ENCODE measurements at regions of chr17 and their contacts with region 1.

Region 1: GRCh38 chr17:10875979-10876555 is 38.2 kb upstream of the PIRT start:
- DNase-seq: no peak
- ATAC-seq: no peak
- H3K4me3 Mint-ChIP-seq: no peak overlapping the region
- H3K27ac Mint-ChIP-seq: no peak overlapping the region
- H3K4me1 Mint-ChIP-seq: no peaks in the 10 kb centered on the region
- H3K27me3 Mint-ChIP-seq: peaks cover 20% of the 10 kb centered on the region
- CTCF ChIP-seq: no peak

Region 2: DNA sequence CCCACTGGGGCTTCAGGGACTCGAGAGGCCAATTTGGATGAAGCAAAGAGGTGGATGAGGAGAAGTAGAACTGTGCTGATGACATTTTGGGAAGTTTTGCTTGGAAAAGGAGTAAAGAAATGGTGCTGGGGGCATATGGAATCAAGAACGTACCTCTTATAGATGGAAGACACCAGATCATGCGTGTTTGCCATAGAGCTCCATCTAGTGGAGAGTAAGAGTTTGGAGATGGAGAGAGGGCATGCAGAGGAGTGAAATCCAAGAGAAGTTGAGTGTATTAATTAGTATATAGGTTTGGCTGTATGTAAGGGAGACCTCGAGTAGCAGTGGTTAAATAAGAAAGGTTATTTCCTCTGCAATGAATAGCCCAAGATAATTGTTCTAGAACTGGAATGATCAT is 420.9 kb after region 1 on chr17:
- CTCF ChIA-PET with region 1: no interaction called
- POLR2A ChIA-PET with region 1: no interaction called
- intact Hi-C with region 1: loop called (anchors 5 kb)
- DNase-seq: no peak
- ATAC-seq: no peak
- H3K4me3 Mint-ChIP-seq: no peak overlapping the region
- H3K27ac Mint-ChIP-seq: no peak overlapping the region
- H3K4me1 Mint-ChIP-seq: no peaks in the 10 kb centered on the region
- H3K27me3 Mint-ChIP-seq: no peaks in the 10 kb centered on the region
- CTCF ChIP-seq: no peak

Region 3: DNA sequence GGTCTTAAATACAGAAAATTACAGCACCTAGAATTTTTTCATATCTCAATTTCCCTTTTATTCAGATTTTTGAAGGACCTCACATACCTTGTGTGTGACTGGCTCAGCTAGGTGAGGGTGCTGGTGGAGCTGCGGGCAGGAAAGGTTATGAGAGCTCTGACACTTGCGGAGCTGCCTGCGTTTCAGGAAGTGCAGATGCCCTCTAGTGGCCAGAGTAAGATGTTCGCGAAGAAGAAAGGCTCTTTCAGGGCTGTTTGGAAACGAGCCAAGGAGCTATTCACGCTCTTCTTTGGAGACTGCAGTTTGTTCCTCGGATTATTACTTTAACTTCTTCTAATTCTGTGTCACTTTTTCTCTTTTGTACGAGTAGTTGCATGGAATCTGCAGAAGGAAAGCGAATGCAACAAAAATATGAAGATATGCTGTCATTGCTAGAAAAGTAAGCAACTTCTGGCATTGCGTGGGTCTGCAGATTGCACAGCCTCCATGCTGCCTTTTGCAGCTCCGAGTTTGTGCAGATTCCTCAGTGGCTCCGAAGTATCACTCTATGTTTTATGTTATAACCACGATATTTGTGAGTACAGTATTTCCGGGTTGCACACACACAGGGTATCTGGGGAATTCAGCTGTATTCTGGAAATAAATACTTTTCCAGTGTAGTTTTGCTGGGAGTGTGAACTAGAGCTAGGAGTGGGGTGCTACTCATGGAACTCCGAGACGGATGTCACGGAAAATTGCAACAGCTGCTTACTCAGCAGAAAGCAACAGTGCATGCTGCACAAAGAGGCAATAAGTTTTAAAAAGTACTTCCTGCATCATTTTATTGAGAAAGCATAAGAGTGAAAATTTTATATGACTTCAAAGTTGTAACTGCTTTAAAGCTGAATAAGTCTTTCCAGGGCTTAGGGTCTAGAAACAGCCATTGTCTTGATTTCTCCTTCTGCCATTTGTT is 768.5 kb after region 1 on chr17:
- CTCF ChIA-PET with region 1: interaction called, 10 read pairs
- POLR2A ChIA-PET with region 1: no interaction called
- intact Hi-C with region 1: no loop called
- DNase-seq: no peak
- ATAC-seq: no peak
- H3K4me3 Mint-ChIP-seq: no peak overlapping the region
- H3K27ac Mint-ChIP-seq: no peak overlapping the region
- H3K4me1 Mint-ChIP-seq: no peaks in the 10 kb centered on the region
- H3K27me3 Mint-ChIP-seq: no peaks in the 10 kb centered on the region
- CTCF ChIP-seq: no peak

Region 4: DNA sequence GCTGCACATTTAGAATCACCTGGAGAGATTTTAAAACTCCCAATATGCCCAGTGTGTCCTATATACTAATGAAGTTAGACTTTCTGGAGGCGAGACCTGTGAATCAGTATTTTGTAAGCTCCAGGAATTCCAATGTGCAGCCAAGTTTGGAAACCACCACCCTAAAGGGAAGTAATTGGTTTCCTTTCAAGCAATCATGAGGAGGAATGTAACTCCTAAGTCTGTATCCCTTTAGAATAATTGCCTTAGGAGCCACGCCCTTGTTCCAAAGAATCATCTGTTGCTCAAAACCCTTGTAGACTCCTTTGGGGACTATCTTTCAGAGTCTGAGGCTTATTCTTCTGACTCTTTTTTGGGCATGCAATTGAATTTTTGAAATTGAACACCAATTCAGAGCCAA is 806.6 kb after region 1 on chr17:
- CTCF ChIA-PET with region 1: no interaction called
- POLR2A ChIA-PET with region 1: no interaction called
- intact Hi-C with region 1: no loop called
- DNase-seq: no peak
- ATAC-seq: no peak
- H3K4me3 Mint-ChIP-seq: no peak overlapping the region
- H3K27ac Mint-ChIP-seq: no peak overlapping the region
- H3K4me1 Mint-ChIP-seq: no peaks in the 10 kb centered on the region
- H3K27me3 Mint-ChIP-seq: no peaks in the 10 kb centered on the region
- CTCF ChIP-seq: no peak

Measured in activated B cell treated with CpG ODN at 0.5 μM for 24 hours (primary cell).